ENCODE measurements at regions of chr5 and their contacts with region 1.

Region 1: GRCh38 chr5:99060306-99061261 is 131.8 kb upstream of the CHD1 start:
- H3K4me3 ChIP-seq: no peak overlapping the region
- H3K27ac ChIP-seq: no peak overlapping the region
- H3K4me1 ChIP-seq: no peaks in the 10 kb centered on the region
- CTCF ChIP-seq: no peak; the same call in 1 of the 2 replicates

Region 2: GRCh38 chr5:98786191-98786853 is 274.3 kb before region 1 on chr5:
- CTCF ChIA-PET with region 1: no interaction called
- POLR2A ChIA-PET with region 1: no interaction called
- H3K4me3 ChIP-seq: no peak overlapping the region
- H3K27ac ChIP-seq: no peak overlapping the region
- H3K4me1 ChIP-seq: peaks cover 27% of the 10 kb centered on the region
- CTCF ChIP-seq: no peak

Region 3: GRCh38 chr5:98905857-98906690 is 154.5 kb before region 1 on chr5:
- CTCF ChIA-PET with region 1: interaction called, 39 read pairs
- POLR2A ChIA-PET with region 1: no interaction called
- H3K4me3 ChIP-seq: no peak overlapping the region
- H3K27ac ChIP-seq: no peak overlapping the region
- H3K4me1 ChIP-seq: peaks cover 6% of the 10 kb centered on the region; the same call in 1 of the 2 replicates
- CTCF ChIP-seq: no peak

Region 4: DNA sequence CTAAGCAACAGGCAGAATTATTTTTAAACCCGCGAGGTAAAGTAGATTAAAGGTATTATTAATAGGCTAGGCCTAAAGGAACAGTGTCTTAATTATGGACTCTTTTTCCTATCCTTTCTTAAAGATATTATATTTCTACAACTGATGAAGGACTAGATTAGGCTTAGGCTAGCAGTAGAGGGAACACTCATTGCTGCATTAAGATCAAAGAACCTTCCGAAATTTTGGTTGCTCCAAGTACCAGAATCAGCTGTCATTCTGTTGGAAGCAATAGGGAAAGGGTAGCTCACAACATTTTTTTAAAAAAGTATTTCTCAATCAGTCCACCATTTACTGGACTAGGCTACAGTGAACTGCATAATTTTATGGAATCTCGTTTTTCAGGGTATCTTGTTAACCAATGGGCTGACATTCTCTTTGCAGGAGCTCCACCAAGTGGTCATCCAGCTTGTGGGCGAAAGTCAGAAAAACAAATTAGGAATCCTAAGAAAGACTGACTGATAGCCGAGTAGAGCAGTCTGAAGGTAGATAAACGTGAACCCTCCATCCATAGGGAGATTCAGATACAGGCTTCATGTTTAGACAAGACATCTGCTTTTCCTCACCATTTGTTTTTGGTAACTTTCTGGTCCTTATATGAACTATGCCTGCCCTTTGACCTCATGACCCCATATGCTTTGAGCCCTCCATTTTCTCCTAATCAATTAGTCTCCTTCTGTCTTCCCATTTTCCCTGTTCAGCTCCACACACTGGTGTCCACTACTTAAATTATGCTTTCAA is 28.2 kb before region 1 on chr5:
- CTCF ChIA-PET with region 1: interaction called, 15 read pairs
- POLR2A ChIA-PET with region 1: no interaction called
- H3K4me3 ChIP-seq: no peak overlapping the region
- H3K27ac ChIP-seq: no peak overlapping the region
- H3K4me1 ChIP-seq: no peaks in the 10 kb centered on the region
- CTCF ChIP-seq: peak; percentile 72

Region 5: GRCh38 chr5:99037668-99038067 is 22.9 kb before region 1 on chr5:
- CTCF ChIA-PET with region 1: interaction called, 15 read pairs
- POLR2A ChIA-PET with region 1: no interaction called
- H3K4me3 ChIP-seq: no peak overlapping the region
- H3K27ac ChIP-seq: no peak overlapping the region
- H3K4me1 ChIP-seq: no peaks in the 10 kb centered on the region
- CTCF ChIP-seq: no peak

Region 6: DNA sequence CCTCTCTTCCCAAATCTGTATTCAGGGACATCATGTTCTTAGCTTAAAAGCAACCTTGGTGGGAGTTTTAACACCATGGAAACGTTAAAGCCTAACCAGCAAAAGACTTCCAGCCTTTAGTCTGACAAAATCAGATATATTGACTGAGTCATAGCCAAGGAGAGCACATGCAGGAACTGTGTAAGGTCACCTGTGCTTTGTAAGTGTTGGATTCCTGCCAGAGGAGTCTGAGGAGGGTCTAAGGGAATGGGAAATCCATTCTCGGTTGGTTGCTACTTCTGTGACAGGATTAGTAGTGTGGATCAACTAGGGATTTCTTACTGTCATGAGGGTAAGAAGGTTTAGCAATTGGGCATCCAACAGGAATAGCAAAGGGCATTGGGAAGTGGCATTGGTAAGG is 10.2 kb after region 1 on chr5:
- CTCF ChIA-PET with region 1: interaction called, 12 read pairs
- POLR2A ChIA-PET with region 1: no interaction called
- H3K4me3 ChIP-seq: no peak overlapping the region
- H3K27ac ChIP-seq: no peak overlapping the region
- H3K4me1 ChIP-seq: peaks cover 4% of the 10 kb centered on the region; the same call in 1 of the 2 replicates
- CTCF ChIP-seq: no peak

Measured in HEK293 (cell line).